Activated B cell treated with CpG ODN at 0.5 μM for 24 hours (primary cell): ENCODE measurements at regions of chr6 and their contacts with region 1.

Region 1: DNA sequence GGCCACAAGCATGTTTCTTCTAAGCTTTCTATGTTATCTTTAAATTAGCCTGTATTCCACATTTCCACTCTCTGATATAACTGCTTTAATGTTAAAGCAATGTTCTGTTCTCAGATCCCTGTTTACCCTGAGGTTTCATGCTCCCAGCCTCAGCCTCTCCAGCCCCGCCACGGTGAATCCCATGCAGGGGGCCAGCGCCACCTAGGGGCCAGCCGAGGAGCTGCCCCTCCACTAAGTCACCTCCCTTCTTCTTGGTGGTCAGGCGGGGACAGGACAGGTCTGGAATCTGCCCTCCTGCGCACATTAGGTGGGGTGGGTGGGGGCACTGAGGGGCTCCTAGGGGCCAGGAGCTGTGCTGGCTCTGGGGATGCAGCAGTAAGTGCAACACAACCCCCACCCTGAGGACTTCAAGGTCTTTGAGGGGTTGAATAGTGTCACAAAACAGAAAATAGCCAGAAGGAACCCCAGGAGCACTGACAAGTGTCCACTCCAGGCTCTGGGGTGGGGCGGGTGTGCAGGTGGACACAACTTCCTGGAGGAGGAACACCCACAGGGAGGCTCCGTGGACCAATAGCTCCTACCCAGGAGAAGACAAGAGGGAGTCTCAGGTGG is 61.6 kb downstream of the RAB44 start:
- DNase-seq: peak; percentile 79
- ATAC-seq: peak; percentile 45
- H3K4me3 Mint-ChIP-seq: peak overlapping the region; percentile 63
- H3K27ac Mint-ChIP-seq: peak overlapping the region; percentile 97
- H3K4me1 Mint-ChIP-seq: peaks cover 56% of the 10 kb centered on the region
- H3K27me3 Mint-ChIP-seq: no peaks in the 10 kb centered on the region
- CTCF ChIP-seq: no peak

Region 2: GRCh38 chr6:36423101-36423824 is 336.0 kb before region 1 on chr6:
- CTCF ChIA-PET with region 1: interaction called, 12 read pairs
- POLR2A ChIA-PET with region 1: interaction called, 6 read pairs
- intact Hi-C with region 1: loop called (anchors 1 kb)
- DNase-seq: peak; percentile 91
- ATAC-seq: peak; percentile 95
- H3K4me3 Mint-ChIP-seq: peak overlapping the region; percentile 94
- H3K27ac Mint-ChIP-seq: peak overlapping the region; percentile 89
- H3K4me1 Mint-ChIP-seq: peaks cover 16% of the 10 kb centered on the region
- H3K27me3 Mint-ChIP-seq: no peaks in the 10 kb centered on the region
- CTCF ChIP-seq: no peak

Region 3: GRCh38 chr6:36546920-36547645 is 212.2 kb before region 1 on chr6 and contains the start of gene STK38:
- CTCF ChIA-PET with region 1: interaction called, 3 read pairs
- POLR2A ChIA-PET with region 1: interaction called, 4 read pairs
- intact Hi-C with region 1: loop called (anchors 1 kb)
- DNase-seq: peak; percentile 84
- ATAC-seq: peak; percentile 86
- H3K4me3 Mint-ChIP-seq: peak within 1 kb of the TSS; percentile 98
- H3K27ac Mint-ChIP-seq: peak within 1 kb of the TSS; percentile 96
- H3K4me1 Mint-ChIP-seq: peaks cover 65% of the 10 kb centered on the region
- H3K27me3 Mint-ChIP-seq: no peaks in the 10 kb centered on the region
- CTCF ChIP-seq: no peak
- total RNA-seq, gene STK38: 23.2 and 26.1 TPM in 2 replicates

Region 4: DNA sequence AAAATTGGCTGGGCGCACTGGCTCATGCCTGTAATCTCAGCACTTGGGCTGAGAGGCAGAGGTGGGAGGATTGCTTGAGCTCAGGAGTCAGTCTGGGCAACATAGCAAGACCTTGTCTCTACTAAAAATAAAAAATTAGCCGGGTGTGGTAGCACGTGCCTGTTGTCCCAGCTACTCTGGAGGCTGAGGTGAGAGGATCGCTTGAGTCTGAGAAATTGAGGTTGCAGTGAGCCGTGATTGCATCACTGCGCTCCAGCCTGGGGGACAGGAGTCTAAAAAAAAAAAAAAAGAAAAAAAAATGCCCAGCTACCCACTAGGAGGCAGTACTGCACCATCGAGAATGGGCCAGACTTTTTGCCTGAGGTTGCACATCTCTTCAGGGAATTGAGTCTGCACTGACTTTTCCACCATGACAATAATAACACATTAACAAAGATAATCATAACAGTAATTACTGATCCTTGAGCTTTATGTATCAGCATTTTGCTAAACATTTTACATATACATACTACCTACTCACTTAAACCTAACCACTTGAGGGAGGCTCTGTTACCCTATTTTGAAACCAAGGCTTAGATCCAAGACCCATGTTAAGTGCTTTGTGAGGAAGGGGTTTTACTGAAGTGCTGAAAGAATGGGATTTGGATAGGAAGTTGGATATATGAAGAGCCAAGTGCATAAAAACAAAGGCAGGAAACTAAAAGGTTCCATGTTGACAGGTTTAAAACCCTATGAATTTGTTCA is 144.1 kb before region 1 on chr6:
- CTCF ChIA-PET with region 1: interaction called, 121 read pairs
- POLR2A ChIA-PET with region 1: interaction called, 41 read pairs
- intact Hi-C with region 1: loop called (anchors 1 kb)
- DNase-seq: no peak
- ATAC-seq: peak; percentile 84
- H3K4me3 Mint-ChIP-seq: no peak overlapping the region
- H3K27ac Mint-ChIP-seq: peak overlapping the region; percentile 66
- H3K4me1 Mint-ChIP-seq: peaks cover 21% of the 10 kb centered on the region
- H3K27me3 Mint-ChIP-seq: no peaks in the 10 kb centered on the region
- CTCF ChIP-seq: peak; percentile 83

Region 5: DNA sequence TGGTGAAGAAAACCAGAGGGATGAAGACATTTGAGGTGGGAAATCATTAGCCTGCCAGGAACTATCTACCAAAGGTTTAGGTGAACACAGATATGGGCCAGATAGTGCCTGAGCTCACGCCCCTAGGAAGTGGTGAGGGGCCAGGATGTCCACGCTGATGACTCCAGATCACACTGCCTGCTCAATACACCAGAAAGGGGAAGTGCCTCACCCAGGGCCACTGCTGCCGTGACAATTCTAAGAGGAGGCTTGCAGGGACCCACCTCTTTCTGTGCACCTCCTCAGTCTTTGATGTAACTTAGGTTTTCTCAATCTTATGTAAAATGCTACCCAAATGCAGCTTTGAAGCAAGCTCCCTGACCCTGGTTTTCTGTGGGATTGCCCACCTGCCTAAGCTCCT is 67.0 kb before region 1 on chr6:
- CTCF ChIA-PET with region 1: interaction called, 11 read pairs
- POLR2A ChIA-PET with region 1: interaction called, 23 read pairs
- intact Hi-C with region 1: loop called (anchors 2 kb)
- DNase-seq: no peak
- ATAC-seq: peak; percentile 98
- H3K4me3 Mint-ChIP-seq: peak overlapping the region; percentile 57
- H3K27ac Mint-ChIP-seq: peak overlapping the region; percentile 93
- H3K4me1 Mint-ChIP-seq: peaks cover 82% of the 10 kb centered on the region
- H3K27me3 Mint-ChIP-seq: no peaks in the 10 kb centered on the region
- CTCF ChIP-seq: no peak

Region 6: DNA sequence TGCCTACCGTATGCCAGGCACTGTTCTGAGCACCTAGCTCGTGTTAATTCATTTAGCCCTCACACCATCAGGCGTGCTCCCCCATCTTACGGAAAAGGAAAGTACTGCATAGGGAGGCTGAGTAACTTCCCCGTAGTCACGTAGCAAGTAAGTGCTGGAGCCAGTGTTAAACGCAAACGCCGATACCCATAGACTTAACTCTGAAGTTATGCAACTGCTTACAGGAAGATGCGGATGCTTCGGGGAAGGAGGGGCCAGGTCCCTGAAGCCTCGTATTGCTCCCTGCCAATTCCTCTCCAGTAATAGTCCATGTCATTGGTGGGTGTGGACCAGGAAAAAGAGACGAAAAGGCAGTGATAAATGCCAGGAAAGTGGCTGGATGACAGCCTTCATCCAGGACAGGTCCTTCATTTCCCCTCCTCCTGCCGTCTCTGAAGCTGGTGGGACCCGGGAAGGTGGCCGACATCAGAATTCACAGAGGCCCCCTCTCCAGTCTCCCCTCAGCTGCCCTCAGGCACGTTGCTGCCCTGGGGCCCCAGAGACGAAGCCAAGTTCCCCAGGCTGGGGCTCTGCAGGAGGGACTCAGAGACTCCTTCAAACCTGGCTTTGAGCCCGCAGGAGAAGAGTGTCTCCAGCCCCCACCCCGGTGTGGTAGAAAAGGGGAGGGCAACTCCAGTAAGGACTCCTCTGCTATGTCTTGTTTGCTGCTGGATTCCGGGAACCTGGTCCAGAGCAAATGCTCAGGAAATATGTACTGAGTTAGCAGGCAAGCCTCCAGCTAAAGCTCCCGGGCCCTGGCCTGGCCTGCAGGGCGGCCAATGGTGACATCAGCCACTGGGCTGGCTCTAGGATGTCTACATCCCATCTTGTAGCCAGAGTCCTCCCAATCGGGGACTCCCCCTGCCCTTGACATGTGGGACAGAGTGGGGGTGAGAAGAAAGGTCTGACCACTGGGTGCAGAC is 23.9 kb before region 1 on chr6:
- CTCF ChIA-PET with region 1: interaction called, 21 read pairs
- POLR2A ChIA-PET with region 1: interaction called, 15 read pairs
- intact Hi-C with region 1: loop called (anchors 2 kb)
- DNase-seq: no peak
- ATAC-seq: peak; percentile 90
- H3K4me3 Mint-ChIP-seq: peak overlapping the region; percentile 72
- H3K27ac Mint-ChIP-seq: peak overlapping the region; percentile 65
- H3K4me1 Mint-ChIP-seq: peaks cover 45% of the 10 kb centered on the region
- H3K27me3 Mint-ChIP-seq: no peaks in the 10 kb centered on the region
- CTCF ChIP-seq: no peak

Region 7: DNA sequence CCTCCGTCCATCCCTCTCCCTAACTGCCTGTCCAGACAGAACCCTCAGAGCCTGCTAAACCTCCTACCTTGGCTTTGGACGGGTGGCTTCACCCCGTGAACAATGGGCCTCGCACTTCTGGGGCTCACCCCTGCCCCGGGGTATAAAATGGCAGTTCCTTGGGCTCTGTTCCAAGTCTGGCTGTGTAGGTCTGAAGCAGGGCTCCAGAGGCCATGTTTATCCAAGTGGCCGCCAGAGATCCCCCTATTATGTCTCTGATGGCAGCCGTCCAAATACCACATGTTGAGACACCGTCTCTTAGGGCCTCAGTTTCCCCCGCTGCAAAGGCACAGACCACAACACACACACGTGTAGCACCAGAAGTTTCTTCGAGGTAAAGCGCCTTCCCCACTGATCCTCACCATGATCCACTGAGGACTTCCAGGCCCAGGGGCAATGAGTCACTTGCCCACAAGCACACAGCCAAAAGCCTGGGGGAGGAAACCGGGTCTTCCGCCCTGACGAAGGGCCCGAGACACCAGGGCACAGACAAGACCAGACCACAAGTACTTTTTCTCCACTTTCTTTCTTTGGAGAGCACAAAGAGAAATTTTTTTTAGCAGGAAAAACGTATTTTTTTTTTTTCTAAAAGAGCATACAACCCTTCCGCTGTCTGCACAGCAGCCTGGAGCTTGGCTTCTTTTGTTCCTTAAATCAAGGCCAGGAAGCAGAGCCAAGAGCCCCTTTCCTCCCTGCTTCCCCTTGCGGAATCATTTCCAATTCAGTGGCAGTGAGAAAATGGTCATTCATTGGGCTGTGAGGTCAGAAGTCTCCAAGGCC is 68.2 kb after region 1 on chr6:
- CTCF ChIA-PET with region 1: no interaction called
- POLR2A ChIA-PET with region 1: no interaction called
- intact Hi-C with region 1: no loop called
- DNase-seq: no peak
- ATAC-seq: no peak
- H3K4me3 Mint-ChIP-seq: no peak overlapping the region
- H3K27ac Mint-ChIP-seq: no peak overlapping the region
- H3K4me1 Mint-ChIP-seq: peaks cover 7% of the 10 kb centered on the region
- H3K27me3 Mint-ChIP-seq: peaks cover 28% of the 10 kb centered on the region
- CTCF ChIP-seq: no peak